BJ (cell line): ENCODE measurements at regions of chr5 and their contacts with region 1.

Region 1: GRCh38 chr5:142324871-142325724 is at the start of gene SPRY4:
- DNase-seq: peak; percentile 87
- H3K4me3 ChIP-seq: peak within 1 kb of the TSS; percentile 93
- H3K27me3 ChIP-seq: no peaks in the 10 kb centered on the region
- CTCF ChIP-seq: peak; percentile 4; the same call in 1 of the 2 replicates
- polyA plus RNA-seq, gene SPRY4: 7.2 and 13.0 TPM in 2 replicates

Region 2: DNA sequence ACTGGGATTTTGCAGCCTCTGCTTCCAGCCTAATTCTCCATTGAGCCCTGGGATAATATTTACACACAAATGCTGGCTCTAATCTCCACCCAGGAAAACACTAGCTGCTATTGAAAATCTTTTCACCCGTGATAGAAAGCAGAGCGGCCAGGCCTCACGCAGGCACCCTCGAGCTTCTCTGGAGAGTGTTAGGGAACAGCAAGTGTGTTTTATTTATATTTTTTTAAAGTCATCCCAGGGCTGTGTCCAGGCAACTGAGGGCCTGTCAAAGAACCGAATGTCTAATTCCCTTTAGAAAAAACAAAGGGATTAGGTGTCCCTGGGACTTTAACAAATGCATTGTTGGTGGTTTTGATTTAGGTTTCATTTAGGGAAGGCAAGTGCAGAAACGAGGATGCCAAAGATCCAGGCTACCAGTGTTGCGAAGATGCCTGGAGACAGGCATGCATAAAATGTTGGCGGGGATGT is 50.9 kb after region 1 on chr5:
- CTCF ChIA-PET with region 1: no interaction called
- POLR2A ChIA-PET with region 1: no interaction called
- DNase-seq: no peak
- H3K4me3 ChIP-seq: no peak overlapping the region
- H3K27me3 ChIP-seq: no peaks in the 10 kb centered on the region
- CTCF ChIP-seq: no peak

Region 3: GRCh38 chr5:142548739-142549275 is 223.7 kb after region 1 on chr5:
- CTCF ChIA-PET with region 1: interaction called, 32 read pairs
- POLR2A ChIA-PET with region 1: no interaction called
- DNase-seq: peak; percentile 85
- H3K4me3 ChIP-seq: no peak overlapping the region
- H3K27me3 ChIP-seq: no peaks in the 10 kb centered on the region
- CTCF ChIP-seq: peak; percentile 84

Region 4: GRCh38 chr5:142674531-142675469 is 349.7 kb after region 1 on chr5:
- CTCF ChIA-PET with region 1: no interaction called
- POLR2A ChIA-PET with region 1: interaction called, 14 read pairs
- DNase-seq: peak; percentile 56
- H3K4me3 ChIP-seq: no peak overlapping the region
- H3K27me3 ChIP-seq: no peaks in the 10 kb centered on the region
- CTCF ChIP-seq: no peak